Heart left ventricle (tissue), 16 donors: ENCODE measurements at regions of chr3 and their contacts with region 1.

Region 1: GRCh38 chr3:132722164-132723024 is at the start of gene NPHP3:
- DNase-seq: peak; percentile 97 to 100 (median 99)
- ATAC-seq: peak; percentile 91 to 95 (median 92)
- H3K4me3 ChIP-seq: peak within 1 kb of the TSS; percentile 70 to 99 (median 86)
- H3K27ac ChIP-seq: peak within 1 kb of the TSS; percentile 91 to 99 (median 96)
- H3K4me1 ChIP-seq: peaks cover 0 to 46% (median 28%) of the 10 kb centered on the region in 12 donors
- H3K27me3 ChIP-seq: no peaks in the 10 kb centered on the region
- CTCF ChIP-seq: peak in 3 of 12 donors; percentile 9 to 23 (median 14)
- POLR2A ChIP-seq: peak; percentile 34 to 89
- total RNA-seq, gene NPHP3: 7.6 to 14.7 (median 10.9) TPM

Region 2: DNA sequence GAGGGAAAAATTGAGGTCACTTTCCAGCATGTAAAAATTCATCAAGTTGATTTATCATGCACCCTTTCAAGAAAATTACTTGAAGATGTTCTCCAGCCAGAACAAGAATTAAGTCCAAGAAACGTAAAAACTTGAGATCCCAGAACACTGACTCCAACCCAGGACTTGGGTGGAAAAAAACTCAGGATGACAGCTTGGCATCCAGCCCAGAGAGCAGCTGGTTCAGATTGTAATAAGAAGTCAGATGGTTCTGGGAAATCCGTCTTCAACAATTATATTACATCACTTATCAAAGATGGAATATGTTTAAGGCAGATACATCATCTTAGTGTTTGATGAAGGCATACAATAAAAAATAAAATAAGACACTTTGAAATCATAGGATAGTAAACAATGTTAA is 328.1 kb before region 1 on chr3:
- intact Hi-C with region 1: no loop called
- DNase-seq: peak; percentile 45 to 69 (median 58)
- ATAC-seq: peak in 2 of 4 donors; percentile 28 to 42
- H3K4me3 ChIP-seq: no peak overlapping the region
- H3K27ac ChIP-seq: no peak overlapping the region
- H3K4me1 ChIP-seq: peaks cover 0 to 9% (median 0%) of the 10 kb centered on the region in 12 donors
- H3K27me3 ChIP-seq: no peaks in the 10 kb centered on the region
- CTCF ChIP-seq: no peak
- POLR2A ChIP-seq: no peak

Region 3: DNA sequence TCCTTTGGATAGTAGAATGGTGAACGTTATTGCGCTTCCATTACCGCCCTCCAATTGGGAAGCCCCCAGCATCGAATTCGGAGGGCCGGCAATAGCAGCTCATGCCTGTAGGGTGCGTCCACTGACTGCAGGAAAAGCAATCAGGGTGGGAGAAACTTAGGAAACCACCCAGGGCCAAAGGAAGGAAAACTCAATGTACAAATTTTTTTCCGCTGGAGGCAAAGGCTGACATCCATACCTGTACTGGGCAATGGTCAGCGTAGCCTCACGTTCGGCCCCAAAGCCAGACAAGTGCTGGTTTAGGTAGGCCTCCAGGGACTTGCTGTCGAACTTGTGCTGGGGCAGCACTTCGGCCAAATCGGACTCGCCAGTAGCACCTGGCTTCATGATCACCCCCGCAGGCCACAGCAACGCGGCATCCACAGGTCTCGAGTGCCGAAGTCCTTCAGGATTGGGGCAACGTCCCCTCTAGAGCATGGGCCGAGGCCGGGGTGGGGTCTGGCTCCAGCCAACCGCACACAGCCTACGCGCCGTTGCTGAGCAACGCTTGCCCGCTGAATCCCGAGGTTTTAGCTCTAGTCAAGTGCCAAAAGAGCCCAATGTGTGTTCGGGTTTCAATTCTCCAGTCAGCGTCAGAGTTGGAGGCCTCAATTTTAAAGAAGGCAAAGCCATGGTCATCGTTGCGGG is 62.9 kb before region 1 on chr3 and contains the start of gene ACAD11:
- intact Hi-C with region 1: loop called in 4 of 10 experiments (anchors 2 to 10 kb)
- DNase-seq: peak; percentile 73 to 81 (median 78)
- ATAC-seq: peak; percentile 83 to 88 (median 85)
- H3K4me3 ChIP-seq: peak within 1 kb of the TSS; percentile 54 to 96 (median 86)
- H3K27ac ChIP-seq: peak within 1 kb of the TSS; percentile 73 to 96 (median 93)
- H3K4me1 ChIP-seq: peaks cover 0 to 73% (median 51%) of the 10 kb centered on the region in 12 donors
- H3K27me3 ChIP-seq: no peaks in the 10 kb centered on the region
- CTCF ChIP-seq: peak; percentile 41 to 82 (median 63)
- POLR2A ChIP-seq: no peak
- total RNA-seq, gene ACAD11: 18.3 to 38.8 (median 24.5) TPM

Region 4: DNA sequence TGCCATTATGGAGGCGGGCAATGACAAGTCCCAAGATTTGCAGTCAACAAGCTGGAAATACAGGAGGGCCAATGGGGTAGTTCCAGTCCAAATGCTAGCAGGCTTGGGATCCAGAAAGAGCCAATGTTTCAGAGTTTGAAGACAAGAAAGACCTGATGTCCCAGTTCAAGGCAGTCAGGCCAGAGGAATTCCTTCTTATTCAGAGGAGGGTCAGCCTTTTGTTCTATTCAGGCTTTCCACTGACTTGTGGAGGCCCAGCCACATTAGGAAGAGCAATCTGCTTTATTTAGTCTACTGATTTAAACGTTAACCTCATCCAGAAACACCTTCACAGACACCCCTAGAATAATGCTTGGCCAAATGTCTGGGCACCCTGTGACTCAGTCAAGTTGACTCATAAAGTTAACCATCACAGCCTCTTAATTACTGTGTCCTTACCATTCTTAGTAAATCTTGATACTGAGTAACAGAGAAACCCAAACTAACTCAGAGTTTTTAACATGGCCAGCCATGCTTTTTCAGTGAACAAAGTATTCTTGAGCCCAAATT is 50.8 kb after region 1 on chr3:
- intact Hi-C with region 1: no loop called
- DNase-seq: no peak
- ATAC-seq: no peak
- H3K4me3 ChIP-seq: no peak overlapping the region
- H3K27ac ChIP-seq: peak overlapping the region in 3 of 12 donors; percentile 3 to 73 (median 50)
- H3K4me1 ChIP-seq: no peaks in the 10 kb centered on the region
- H3K27me3 ChIP-seq: peaks cover 0 to 7% (median 0%) of the 10 kb centered on the region in 9 donors
- CTCF ChIP-seq: no peak
- POLR2A ChIP-seq: no peak

Region 5: DNA sequence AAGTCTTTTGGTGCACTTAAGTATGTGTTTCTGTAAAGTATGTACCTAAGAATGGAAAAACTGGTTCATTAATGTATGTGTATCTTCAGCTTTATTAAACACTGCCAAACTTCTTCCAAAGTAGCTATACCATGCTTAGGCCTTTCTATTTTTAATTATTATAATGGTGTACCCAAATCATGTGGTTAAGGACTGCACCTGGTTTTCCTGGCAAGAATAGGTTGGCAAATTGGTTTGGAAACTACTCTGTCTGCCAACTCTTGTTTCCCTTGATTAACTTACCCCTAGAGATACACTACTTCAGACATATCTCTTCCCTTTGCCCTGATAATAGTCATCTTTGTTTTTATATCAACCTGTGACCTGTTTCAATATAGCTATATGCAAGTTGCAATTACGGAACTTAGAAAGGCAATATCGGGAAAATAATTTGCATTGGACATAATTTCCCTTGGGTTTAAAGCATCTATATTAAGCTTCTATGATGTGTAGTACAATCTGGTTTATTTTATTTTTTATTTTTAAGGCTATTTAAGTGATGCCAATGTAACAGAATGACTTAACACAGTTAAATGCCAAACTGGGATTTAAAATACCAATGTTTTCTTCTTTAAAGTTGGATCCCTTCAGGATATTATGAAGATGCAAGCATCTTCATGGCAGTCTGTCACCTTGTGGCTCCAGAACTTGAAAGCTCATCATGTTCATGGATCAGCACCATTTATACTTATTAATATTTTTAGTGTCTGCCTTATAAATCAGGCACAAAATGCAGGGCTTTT is 275.2 kb after region 1 on chr3:
- intact Hi-C with region 1: no loop called
- DNase-seq: no peak
- ATAC-seq: no peak
- H3K4me3 ChIP-seq: no peak overlapping the region
- H3K27ac ChIP-seq: no peak overlapping the region
- H3K4me1 ChIP-seq: no peaks in the 10 kb centered on the region
- H3K27me3 ChIP-seq: no peaks in the 10 kb centered on the region
- CTCF ChIP-seq: no peak
- POLR2A ChIP-seq: no peak

Region 6: DNA sequence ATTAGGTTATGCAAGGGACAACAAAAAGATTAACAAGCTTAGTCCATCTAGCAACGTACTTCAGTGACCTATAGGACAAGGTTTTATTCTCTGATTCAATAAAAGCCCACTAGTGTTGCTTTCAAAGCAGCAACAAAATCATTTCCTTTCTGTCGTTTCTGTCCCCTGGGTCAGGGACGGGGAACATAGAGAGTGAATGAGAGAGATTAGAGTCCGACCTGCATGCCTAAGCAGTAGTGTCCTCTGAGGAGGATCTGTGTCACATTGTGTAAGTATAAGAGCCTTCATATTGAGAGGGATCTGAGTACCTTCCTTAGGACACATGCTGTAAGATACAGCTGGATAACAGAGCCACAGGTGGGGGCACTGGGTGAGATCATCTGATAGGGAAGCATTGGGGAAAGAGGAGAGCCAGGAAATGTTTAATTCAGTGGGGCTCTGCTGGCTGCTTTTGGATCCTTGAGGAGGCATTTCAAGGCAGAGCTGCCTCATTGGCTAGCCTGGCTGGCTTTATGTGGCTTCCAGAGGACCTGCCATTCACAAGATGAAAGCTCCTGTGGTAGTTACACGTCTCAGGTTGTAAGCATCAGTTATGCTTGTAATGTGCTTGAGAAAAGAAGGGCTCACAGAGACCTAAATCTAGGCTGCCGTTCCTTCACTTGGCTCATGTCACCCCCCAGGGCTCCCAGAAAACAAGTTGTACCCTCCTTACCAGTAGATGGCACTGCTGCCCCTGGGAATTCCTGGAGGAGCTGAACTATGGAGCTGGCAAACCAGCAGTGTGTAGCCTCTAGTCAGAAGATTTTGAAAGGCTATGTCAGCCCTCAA is 318.5 kb after region 1 on chr3:
- intact Hi-C with region 1: loop called in 2 of 10 experiments (anchors 2 to 10 kb)
- DNase-seq: peak; percentile 68 to 80 (median 72)
- ATAC-seq: peak; percentile 80 to 91 (median 88)
- H3K4me3 ChIP-seq: no peak overlapping the region
- H3K27ac ChIP-seq: no peak overlapping the region
- H3K4me1 ChIP-seq: peaks cover 0 to 19% (median 5%) of the 10 kb centered on the region in 12 donors
- H3K27me3 ChIP-seq: peaks cover 9 to 38% (median 24%) of the 10 kb centered on the region in 9 donors
- CTCF ChIP-seq: peak; percentile 53 to 80 (median 73)
- POLR2A ChIP-seq: no peak

Region 7: GRCh38 chr3:133384331-133385027 is 662.1 kb after region 1 on chr3:
- intact Hi-C with region 1: loop called in 1 of 10 experiments (anchors 5 kb)
- DNase-seq: peak; percentile 45 to 78 (median 56)
- ATAC-seq: peak; percentile 87 to 94 (median 91)
- H3K4me3 ChIP-seq: no peak overlapping the region
- H3K27ac ChIP-seq: no peak overlapping the region
- H3K4me1 ChIP-seq: peaks cover 0 to 8% (median 0%) of the 10 kb centered on the region in 12 donors
- H3K27me3 ChIP-seq: peaks cover 0 to 3% (median 0%) of the 10 kb centered on the region in 9 donors
- CTCF ChIP-seq: peak; percentile 56 to 85 (median 76)
- POLR2A ChIP-seq: no peak

Region 8: DNA sequence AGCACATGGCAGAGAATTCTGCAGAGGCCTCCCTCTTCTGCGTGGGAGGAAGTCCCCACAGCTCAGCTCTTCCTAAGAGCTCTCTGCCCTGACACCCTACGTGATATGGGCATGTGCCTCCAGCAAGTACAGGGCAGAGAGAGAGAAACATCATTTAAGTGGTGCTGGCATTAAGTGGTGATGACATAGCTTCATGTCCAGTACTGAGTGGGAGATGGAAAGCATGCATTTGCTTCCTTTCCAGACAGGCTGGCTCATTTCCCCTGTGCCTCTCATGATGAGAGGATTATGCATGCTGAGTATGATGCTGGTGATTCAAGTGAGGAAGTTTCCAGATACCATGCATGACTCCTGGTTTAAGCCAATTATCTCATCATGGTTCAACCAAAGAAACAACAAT is 704.3 kb after region 1 on chr3:
- intact Hi-C with region 1: loop called in 6 of 10 experiments (anchors 1 to 5 kb)
- DNase-seq: no peak
- ATAC-seq: peak in 1 of 4 donors; percentile 39
- H3K4me3 ChIP-seq: no peak overlapping the region
- H3K27ac ChIP-seq: no peak overlapping the region
- H3K4me1 ChIP-seq: peaks cover 0 to 5% (median 0%) of the 10 kb centered on the region in 12 donors
- H3K27me3 ChIP-seq: peaks cover 0 to 19% (median 6%) of the 10 kb centered on the region in 9 donors
- CTCF ChIP-seq: no peak
- POLR2A ChIP-seq: no peak

Region 9: DNA sequence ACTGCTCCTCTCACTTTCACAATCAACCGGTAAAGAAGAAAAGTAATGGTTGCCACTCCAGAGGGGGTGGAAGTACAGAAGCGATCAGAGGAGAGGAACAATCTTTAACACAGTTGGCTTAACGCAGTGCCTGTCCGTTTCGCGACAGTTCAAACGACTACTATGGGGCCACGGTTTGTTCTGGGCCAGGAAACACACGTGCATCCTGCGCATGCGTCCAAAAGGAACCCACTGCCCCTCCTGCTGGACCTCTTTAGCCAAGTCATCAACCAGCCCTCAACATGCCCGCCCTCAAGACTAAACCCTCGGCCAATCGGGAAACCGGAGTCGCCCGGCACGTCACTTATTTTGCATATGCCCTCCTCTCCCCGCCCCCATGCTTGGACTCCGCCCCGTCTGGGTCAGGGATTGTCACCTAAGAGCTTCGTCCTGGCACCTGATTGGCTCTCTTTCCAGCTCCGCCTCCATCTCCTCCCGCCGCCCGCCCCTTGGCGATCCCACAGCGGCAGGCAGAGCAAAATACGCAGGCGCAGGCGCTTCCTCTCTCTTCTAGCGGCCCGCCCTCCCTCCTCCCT is 850.7 kb after region 1 on chr3:
- intact Hi-C with region 1: loop called in 9 of 10 experiments (anchors 1 to 10 kb)
- DNase-seq: peak; percentile 100
- ATAC-seq: peak; percentile 93 to 97 (median 96)
- H3K4me3 ChIP-seq: peak overlapping the region in 11 of 12 donors; percentile 39 to 96 (median 88)
- H3K27ac ChIP-seq: peak overlapping the region; percentile 91 to 98 (median 96)
- H3K4me1 ChIP-seq: peaks cover 4 to 75% (median 43%) of the 10 kb centered on the region in 12 donors
- H3K27me3 ChIP-seq: no peaks in the 10 kb centered on the region
- CTCF ChIP-seq: peak in 9 of 12 donors; percentile 7 to 51 (median 18)
- POLR2A ChIP-seq: peak in 1 of 2 donors; percentile 70

Region 10: DNA sequence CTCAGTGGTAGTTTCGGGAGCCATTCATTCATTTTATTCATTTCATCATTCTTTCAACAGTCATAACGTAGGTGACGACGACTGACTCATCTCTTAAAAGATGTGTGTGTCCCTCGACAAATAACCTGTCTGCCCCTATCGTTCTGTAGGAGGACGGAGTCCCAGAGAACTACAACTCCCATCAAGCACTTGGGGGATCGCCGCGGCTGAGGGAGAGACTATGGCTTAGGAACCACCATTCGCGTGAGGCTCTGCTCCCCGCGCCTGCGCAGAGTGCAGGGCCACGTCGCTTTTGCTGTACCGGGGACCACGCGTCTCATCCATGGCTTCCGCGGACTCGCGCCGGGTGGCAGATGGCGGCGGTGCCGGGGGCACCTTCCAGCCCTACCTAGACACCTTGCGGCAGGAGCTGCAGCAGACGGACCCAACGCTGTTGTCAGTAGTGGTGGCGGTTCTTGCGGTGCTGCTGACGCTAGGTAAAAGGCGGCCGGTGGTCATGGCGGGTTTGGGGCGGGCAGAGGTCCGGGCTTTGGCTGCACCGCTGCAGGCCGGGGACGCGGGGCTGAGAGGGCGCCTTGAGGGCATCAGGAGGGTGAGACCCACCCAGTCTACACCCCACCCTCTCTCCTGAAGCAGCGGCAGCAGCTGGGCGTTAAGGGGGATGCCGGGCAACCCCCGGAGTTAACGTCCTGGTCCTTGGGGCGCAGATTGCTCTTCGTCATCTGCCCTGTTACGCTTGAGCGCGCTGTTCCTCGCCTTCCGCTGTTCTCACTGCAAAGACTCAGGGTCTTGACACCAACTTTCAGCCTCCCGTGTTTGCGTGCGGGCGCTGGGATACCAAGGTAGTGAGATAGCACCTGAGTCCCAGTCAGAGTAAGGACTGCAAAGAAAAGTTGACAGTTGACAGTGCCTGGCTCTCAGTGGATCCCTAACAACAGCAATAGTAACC is 1083.4 kb after region 1 on chr3 and contains the start of gene SRPRB:
- intact Hi-C with region 1: loop called in 3 of 10 experiments (anchors 5 to 10 kb)
- DNase-seq: peak; percentile 94 to 98 (median 96)
- ATAC-seq: peak; percentile 100
- H3K4me3 ChIP-seq: peak within 1 kb of the TSS; percentile 61 to 95 (median 82)
- H3K27ac ChIP-seq: peak within 1 kb of the TSS in 11 of 12 donors; percentile 41 to 80 (median 67)
- H3K4me1 ChIP-seq: peaks cover 0 to 18% (median 8%) of the 10 kb centered on the region in 12 donors
- H3K27me3 ChIP-seq: peaks cover 0 to 6% (median 0%) of the 10 kb centered on the region in 9 donors
- CTCF ChIP-seq: no peak
- POLR2A ChIP-seq: peak in 1 of 2 donors; percentile 77
- total RNA-seq, gene SRPRB: 13.7 to 35.9 (median 24.9) TPM